CD8-positive, alpha-beta T cell (primary cell): ENCODE measurements at regions of chr1 and their contacts with region 1.

Region 1: DNA sequence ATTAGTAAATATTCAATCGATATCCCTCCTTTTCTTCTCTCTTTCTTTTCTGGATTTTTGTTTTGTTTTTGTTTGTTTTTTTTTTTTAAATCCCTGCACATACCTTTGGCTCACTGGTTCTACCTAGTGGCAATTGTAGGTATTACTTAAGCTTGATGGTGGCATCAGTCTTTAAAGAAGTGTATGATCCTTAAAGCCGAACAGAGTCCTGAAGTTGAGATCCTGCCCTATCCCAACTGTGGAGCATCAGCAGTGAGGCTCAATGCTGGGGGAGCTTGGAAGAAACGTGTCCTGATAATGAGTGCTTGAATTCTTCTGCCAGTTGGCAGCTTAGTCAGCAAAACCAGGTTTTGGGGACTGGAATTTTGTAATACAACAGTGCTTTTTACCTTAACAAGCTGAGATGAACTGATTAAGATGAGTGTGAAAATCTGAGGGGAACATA is 60.8 kb downstream of the FASLG start:
- DNase-seq: peak in 2 of 9 experiments; percentile 73 to 77
- ATAC-seq: peak; percentile 93
- H3K4me3 ChIP-seq: no peak overlapping the region
- H3K4me3 Mint-ChIP-seq: no peak overlapping the region
- H3K27ac ChIP-seq: no peak overlapping the region
- H3K27ac Mint-ChIP-seq: no peak overlapping the region
- H3K4me1 ChIP-seq: no peaks in the 10 kb centered on the region
- H3K4me1 Mint-ChIP-seq: peaks cover 22% of the 10 kb centered on the region
- H3K27me3 ChIP-seq: no peaks in the 10 kb centered on the region
- H3K27me3 Mint-ChIP-seq: peaks cover 3% of the 10 kb centered on the region
- CTCF ChIP-seq: peak; percentile 94

Region 2: DNA sequence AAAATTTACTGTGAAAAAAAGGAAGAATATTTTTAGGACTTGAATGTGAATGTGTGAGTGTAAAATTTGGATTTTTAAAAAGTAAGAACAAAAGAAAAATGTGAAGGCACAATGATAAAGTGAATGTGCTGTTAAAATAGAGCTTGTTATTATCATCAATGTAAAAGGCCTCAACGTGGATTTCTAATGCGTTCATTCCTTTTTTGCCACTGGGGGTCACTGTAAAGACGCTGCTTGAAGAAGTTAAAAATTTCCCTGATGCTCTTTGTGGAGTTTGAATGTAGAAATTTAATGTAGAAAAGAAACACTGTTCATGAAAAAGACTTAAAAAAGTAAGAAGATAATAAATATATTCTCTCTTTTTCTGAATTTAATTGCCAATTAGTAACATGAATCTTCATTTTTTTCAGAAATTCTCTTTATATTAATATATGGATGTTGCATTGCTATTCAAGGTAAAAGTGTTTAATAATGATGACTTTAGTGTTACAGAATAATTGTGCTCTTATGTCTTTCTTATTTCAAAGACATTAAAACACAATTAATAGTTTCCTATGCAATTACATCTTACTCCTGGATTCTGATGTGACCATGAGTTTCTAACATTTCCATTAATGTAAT is 716.9 kb before region 1 on chr1:
- CTCF ChIA-PET with region 1: interaction called, 4 read pairs
- POLR2A ChIA-PET with region 1: no interaction called
- intact Hi-C with region 1: loop called in 1 of 2 experiments (anchors 10 kb)
- DNase-seq: peak in 4 of 9 experiments; percentile 9 to 66 (median 36)
- ATAC-seq: peak; percentile 44
- H3K4me3 ChIP-seq: no peak overlapping the region
- H3K4me3 Mint-ChIP-seq: no peak overlapping the region
- H3K27ac ChIP-seq: no peak overlapping the region
- H3K27ac Mint-ChIP-seq: no peak overlapping the region
- H3K4me1 ChIP-seq: no peaks in the 10 kb centered on the region
- H3K4me1 Mint-ChIP-seq: no peaks in the 10 kb centered on the region
- H3K27me3 ChIP-seq: no peaks in the 10 kb centered on the region
- H3K27me3 Mint-ChIP-seq: peaks cover under 1% of the 10 kb centered on the region
- CTCF ChIP-seq: peak; percentile 72

Region 3: DNA sequence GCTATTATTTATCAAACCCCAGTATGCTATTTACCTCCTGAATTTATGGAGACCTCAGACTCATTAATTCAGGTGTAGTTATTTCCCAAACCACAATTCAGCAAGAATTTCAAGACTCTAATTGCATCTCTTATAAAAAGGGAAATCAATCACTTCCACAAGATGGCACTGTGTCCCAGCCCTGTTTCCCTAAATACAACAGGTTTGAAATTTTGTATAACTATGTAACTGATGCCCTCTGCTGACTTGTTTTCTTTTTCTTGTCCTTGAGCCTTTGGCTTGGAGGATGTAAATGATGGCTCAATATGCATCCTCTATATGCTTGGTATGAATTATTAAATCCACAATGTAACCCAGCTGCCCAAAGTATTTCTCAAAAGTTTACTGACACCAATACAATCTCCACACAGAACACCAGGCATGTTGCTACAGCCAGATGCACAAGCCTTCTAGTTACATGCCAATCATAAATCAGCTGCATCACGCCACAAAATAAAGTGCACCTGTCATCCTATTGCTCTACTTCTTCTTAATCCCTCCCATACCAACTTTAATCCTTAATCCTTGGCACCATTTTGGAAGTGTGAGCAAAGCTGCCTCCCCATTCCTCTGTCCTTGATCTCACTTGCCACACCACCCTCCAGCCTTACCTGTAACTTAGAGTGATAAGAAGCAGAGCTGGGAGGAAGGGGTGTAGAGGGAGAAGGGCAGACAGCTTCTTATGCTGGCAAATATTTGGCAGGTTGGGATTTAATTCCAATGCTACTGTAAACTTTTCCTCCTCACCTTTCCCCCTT is 290.2 kb before region 1 on chr1:
- CTCF ChIA-PET with region 1: interaction called, 14 read pairs
- POLR2A ChIA-PET with region 1: no interaction called
- intact Hi-C with region 1: loop called in 1 of 2 experiments (anchors 2 kb)
- DNase-seq: peak in 6 of 9 experiments; percentile 22 to 80 (median 47)
- ATAC-seq: peak; percentile 75
- H3K4me3 ChIP-seq: no peak overlapping the region
- H3K4me3 Mint-ChIP-seq: no peak overlapping the region
- H3K27ac ChIP-seq: no peak overlapping the region
- H3K27ac Mint-ChIP-seq: peak overlapping the region; percentile 7
- H3K4me1 ChIP-seq: peaks cover 51% of the 10 kb centered on the region
- H3K4me1 Mint-ChIP-seq: peaks cover 49% of the 10 kb centered on the region
- H3K27me3 ChIP-seq: no peaks in the 10 kb centered on the region
- H3K27me3 Mint-ChIP-seq: no peaks in the 10 kb centered on the region
- CTCF ChIP-seq: peak; percentile 82

Region 4: DNA sequence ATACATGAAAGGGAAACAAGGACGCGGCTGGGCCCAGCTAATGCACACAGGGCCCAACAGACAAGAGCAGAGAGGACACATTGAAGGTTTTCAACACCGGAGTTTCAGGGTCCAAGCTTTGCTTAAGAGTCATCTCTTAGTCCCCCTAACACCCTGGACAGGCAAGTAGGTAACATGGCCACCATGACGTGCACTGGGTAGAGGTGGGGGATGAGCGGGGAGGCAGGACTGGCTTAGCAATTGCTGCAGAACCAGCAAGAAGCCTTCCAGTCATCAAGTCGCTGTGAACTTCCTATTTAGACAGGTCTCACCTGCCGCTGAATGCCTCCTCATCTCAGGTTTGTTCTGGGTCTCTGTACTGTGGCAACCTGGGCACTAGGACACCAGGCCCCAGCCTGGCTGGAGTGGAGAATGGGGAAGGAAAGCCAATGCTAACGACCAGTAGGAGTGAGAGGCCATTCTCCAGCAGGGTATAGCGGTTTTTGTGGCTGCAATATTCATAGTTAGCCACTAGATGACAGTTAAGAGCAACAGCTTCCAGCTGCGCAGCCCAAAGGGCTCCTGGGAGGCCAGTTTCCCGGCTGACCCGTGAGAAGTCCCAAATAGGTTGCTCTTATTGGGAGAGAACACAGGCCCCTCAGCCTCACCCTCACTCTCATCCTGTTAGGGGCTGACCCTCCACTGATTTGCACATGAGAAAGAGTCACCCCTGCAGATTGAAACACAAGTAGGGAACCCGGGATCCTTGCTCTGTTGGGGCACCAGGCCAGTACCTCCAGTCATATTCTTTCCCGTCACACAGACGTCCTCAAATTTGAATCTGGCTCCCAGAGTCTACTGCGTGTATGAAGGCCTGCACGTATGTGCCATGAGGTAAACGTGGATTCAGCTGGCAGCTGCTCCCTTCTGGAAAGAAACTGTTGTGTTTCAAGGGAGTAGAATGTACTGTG is 269.9 kb before region 1 on chr1:
- CTCF ChIA-PET with region 1: interaction called, 8 read pairs
- POLR2A ChIA-PET with region 1: no interaction called
- intact Hi-C with region 1: loop called (anchors 1 to 5 kb)
- DNase-seq: peak in 4 of 9 experiments; percentile 10 to 59 (median 40)
- ATAC-seq: peak; percentile 80
- H3K4me3 ChIP-seq: no peak overlapping the region
- H3K4me3 Mint-ChIP-seq: no peak overlapping the region
- H3K27ac ChIP-seq: no peak overlapping the region
- H3K27ac Mint-ChIP-seq: no peak overlapping the region
- H3K4me1 ChIP-seq: peaks cover 13% of the 10 kb centered on the region
- H3K4me1 Mint-ChIP-seq: peaks cover 12% of the 10 kb centered on the region
- H3K27me3 ChIP-seq: no peaks in the 10 kb centered on the region
- H3K27me3 Mint-ChIP-seq: no peaks in the 10 kb centered on the region
- CTCF ChIP-seq: peak; percentile 65

Region 5: DNA sequence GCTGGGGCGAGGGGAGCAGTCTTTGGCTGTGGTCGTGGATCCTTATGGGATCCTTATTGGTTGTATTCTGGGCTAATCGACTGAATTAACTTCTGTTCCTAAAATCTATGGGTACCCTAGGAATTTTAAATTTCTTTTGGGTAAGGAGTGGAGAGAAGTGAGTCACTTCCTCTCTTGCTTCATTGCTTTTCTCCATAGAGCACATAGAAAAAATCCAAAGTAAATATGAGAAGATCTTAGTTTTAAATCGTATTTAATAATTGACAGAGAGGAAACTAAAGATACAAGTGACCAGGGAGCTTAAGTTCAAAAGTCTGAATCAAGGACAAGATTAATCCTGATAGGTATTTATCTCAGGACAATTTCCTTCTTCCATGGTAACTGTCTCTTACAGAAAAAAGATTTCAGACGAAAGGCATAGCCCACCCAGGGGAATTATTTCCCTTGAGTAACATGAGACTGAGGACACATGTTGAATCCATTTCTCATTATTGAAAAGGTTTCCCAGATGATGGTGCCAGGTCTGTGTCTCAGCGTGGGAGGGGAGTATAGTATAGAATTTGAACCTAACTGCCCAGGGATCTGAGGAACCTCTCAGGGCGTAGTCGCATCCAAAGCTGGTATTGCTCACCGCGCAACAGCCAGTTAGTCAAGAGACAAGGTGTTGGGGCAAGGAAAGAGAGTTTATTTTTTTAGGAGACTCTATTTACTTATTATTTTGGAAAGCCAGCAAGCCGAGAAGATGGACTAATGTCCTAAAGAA is 89.5 kb before region 1 on chr1:
- CTCF ChIA-PET with region 1: interaction called, 13 read pairs
- POLR2A ChIA-PET with region 1: no interaction called
- intact Hi-C with region 1: no loop called
- DNase-seq: no peak
- ATAC-seq: no peak
- H3K4me3 ChIP-seq: no peak overlapping the region
- H3K4me3 Mint-ChIP-seq: no peak overlapping the region
- H3K27ac ChIP-seq: no peak overlapping the region
- H3K27ac Mint-ChIP-seq: no peak overlapping the region
- H3K4me1 ChIP-seq: peaks cover 19% of the 10 kb centered on the region
- H3K4me1 Mint-ChIP-seq: peaks cover 29% of the 10 kb centered on the region
- H3K27me3 ChIP-seq: no peaks in the 10 kb centered on the region
- H3K27me3 Mint-ChIP-seq: peaks cover 5% of the 10 kb centered on the region
- CTCF ChIP-seq: no peak

Region 6: GRCh38 chr1:172662464-172663109 is 57.1 kb before region 1 on chr1:
- CTCF ChIA-PET with region 1: interaction called, 8 read pairs
- POLR2A ChIA-PET with region 1: interaction called, 4 read pairs
- intact Hi-C with region 1: loop called in 1 of 2 experiments (anchors 2 kb)
- DNase-seq: peak; percentile 65 to 95 (median 88)
- ATAC-seq: peak; percentile 84
- H3K4me3 ChIP-seq: peak overlapping the region in 1 of 2 experiments; percentile 68
- H3K4me3 Mint-ChIP-seq: peak overlapping the region; percentile 63
- H3K27ac ChIP-seq: peak overlapping the region in 1 of 2 experiments; percentile 77
- H3K27ac Mint-ChIP-seq: peak overlapping the region; percentile 79
- H3K4me1 ChIP-seq: peaks cover 39% of the 10 kb centered on the region
- H3K4me1 Mint-ChIP-seq: peaks cover 56% of the 10 kb centered on the region
- H3K27me3 ChIP-seq: no peaks in the 10 kb centered on the region
- H3K27me3 Mint-ChIP-seq: peaks cover 12% of the 10 kb centered on the region
- CTCF ChIP-seq: no peak

Region 7: GRCh38 chr1:172699111-172699510 is 20.6 kb before region 1 on chr1:
- CTCF ChIA-PET with region 1: interaction called, 6 read pairs
- POLR2A ChIA-PET with region 1: no interaction called
- intact Hi-C with region 1: loop called in 1 of 2 experiments (anchors 2 kb)
- DNase-seq: peak; percentile 43 to 92 (median 77)
- ATAC-seq: peak; percentile 76
- H3K4me3 ChIP-seq: peak overlapping the region in 1 of 2 experiments; percentile 0
- H3K4me3 Mint-ChIP-seq: peak overlapping the region; percentile 64
- H3K27ac ChIP-seq: peak overlapping the region; percentile 6 to 84
- H3K27ac Mint-ChIP-seq: peak overlapping the region; percentile 91
- H3K4me1 ChIP-seq: peaks cover 76% of the 10 kb centered on the region
- H3K4me1 Mint-ChIP-seq: peaks cover 49% of the 10 kb centered on the region
- H3K27me3 ChIP-seq: no peaks in the 10 kb centered on the region
- H3K27me3 Mint-ChIP-seq: no peaks in the 10 kb centered on the region
- CTCF ChIP-seq: no peak